ENCODE measurements at regions of chr4 and their contacts with region 1.

Region 1: DNA sequence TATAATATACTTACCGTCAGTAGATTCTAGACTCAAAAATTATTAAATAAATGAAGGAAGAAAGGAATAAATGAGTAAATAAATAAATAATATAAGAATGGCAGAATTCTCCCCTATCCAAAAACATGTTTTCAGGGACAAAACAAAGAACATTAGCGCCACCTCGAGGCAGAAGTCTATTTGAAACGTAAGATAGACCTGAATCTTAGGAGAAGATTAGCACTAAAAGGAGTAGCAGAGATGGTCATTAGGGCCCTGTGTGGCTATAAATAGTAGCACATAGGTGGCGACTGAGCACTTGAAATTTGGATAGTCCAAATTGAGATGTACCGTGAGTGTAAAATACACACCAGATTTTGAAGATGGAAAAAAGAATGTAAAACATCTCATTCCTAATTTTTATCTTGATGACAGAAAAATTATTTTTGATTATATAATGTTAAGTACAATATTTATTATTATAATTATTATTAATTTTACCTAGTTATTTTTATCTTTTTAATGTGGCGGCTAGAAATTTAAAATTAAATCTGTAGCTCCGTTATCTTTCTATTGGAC is 24.3 kb upstream of the SRD5A3 start:
- DNase-seq: peak; percentile 83
- H3K4me3 ChIP-seq: no peak overlapping the region
- H3K27ac ChIP-seq: no peak overlapping the region
- H3K4me1 ChIP-seq: peaks cover 6% of the 10 kb centered on the region
- H3K27me3 ChIP-seq: no peaks in the 10 kb centered on the region
- CTCF ChIP-seq: peak; percentile 58

Region 2: DNA sequence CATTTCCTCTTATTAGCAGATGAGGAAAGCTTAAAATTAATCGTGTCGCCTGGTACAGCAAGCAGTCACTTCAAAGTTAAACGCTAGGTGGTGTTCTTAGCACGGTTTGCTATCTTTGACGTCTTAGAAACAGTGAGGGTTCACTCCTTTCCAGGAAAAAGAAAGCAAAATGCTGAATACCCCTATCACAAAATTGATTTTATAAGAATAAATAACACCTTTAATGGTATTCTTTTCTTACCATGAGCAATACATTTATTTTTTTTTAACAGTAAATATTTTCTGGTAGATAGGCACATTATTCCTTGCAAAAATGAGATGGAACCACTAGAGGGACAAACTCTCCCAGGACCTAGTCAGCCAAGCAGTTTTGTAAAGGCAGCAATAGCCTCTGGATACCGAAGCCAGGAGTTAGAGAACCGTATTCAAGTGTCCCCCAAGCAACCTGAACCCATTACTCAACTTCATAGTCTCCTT is 350.3 kb before region 1 on chr4:
- CTCF ChIA-PET with region 1: interaction called, 6 read pairs
- POLR2A ChIA-PET with region 1: no interaction called
- intact Hi-C with region 1: loop called (anchors 2 kb)
- DNase-seq: peak; percentile 48
- H3K4me3 ChIP-seq: no peak overlapping the region
- H3K27ac ChIP-seq: no peak overlapping the region
- H3K4me1 ChIP-seq: no peaks in the 10 kb centered on the region
- H3K27me3 ChIP-seq: no peaks in the 10 kb centered on the region
- CTCF ChIP-seq: peak; percentile 75

Region 3: DNA sequence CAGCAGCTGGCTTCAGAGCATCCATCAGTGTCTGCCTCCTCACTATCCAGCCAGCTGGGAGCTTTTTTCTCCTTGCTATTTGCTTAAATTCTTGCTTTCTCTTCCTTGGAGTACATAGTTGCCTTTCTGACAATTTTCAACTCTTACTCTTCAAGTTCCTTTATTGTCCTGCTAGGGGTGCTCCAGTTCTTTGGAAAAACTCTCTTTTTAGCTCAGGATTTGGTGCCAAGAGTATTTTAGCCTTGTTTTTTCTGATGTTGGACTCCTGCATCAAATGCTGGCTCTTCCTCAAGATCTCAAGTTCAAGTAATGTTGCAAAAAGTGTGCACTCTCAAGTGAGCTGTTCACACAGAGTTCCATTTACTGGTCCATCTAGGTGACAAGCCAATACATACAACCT is 322.8 kb before region 1 on chr4:
- CTCF ChIA-PET with region 1: no interaction called
- POLR2A ChIA-PET with region 1: no interaction called
- intact Hi-C with region 1: loop called (anchors 5 kb)
- DNase-seq: no peak
- H3K4me3 ChIP-seq: no peak overlapping the region
- H3K27ac ChIP-seq: no peak overlapping the region
- H3K4me1 ChIP-seq: no peaks in the 10 kb centered on the region
- H3K27me3 ChIP-seq: no peaks in the 10 kb centered on the region
- CTCF ChIP-seq: peak; percentile 21; the same call in 1 of the 2 replicates

Measured in A673 (cell line).